Cardiac septum (tissue), 1 donor: ENCODE measurements at regions of chrX and their contacts with region 1.

Region 1: DNA sequence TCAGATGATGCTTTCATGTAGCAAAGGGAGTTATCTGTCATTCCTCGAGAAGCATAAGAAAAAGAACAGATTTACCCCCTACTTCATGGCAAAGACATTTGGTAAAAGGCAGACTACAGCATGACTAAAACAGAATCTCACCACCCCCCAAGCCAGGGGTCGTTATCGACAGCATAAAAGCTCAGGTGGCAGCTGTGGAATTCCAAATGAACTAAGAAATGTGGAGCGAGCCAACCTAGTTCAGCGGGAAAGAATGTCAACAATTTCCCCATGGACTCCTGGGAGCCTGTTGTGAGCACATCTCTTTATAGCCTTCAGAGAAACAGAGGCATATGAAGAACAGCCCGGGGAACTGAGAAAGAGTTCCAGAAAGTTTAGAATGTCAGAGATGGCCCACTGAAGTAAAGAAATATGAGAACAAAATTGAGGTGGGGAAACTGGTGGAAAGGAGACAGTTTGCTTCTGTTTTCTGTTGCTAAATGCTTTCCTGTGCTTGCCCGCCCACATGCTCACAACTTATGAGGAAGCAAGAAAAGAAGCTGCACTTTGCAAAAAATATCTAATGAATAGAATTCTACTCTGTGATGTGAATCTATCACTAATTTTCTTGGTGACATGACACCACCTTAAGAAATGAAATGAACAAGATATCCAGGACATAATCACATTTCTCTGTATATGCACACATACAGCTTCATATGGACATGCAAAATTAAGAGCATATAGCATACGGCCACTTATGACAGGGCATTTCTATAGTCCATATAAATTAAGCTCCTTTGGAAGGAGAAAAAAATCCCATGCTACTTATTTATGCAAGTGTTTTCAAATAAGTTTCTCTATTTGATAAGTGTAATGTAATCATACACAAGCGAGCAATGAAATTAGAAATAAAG is 135.3 kb upstream of the MID1 start:
- DNase-seq: no peak

Region 2: GRCh38 chrX:10098270-10098713 is 657.4 kb before region 1 on chrX:
- intact Hi-C with region 1: no loop called
- DNase-seq: no peak

Region 3: DNA sequence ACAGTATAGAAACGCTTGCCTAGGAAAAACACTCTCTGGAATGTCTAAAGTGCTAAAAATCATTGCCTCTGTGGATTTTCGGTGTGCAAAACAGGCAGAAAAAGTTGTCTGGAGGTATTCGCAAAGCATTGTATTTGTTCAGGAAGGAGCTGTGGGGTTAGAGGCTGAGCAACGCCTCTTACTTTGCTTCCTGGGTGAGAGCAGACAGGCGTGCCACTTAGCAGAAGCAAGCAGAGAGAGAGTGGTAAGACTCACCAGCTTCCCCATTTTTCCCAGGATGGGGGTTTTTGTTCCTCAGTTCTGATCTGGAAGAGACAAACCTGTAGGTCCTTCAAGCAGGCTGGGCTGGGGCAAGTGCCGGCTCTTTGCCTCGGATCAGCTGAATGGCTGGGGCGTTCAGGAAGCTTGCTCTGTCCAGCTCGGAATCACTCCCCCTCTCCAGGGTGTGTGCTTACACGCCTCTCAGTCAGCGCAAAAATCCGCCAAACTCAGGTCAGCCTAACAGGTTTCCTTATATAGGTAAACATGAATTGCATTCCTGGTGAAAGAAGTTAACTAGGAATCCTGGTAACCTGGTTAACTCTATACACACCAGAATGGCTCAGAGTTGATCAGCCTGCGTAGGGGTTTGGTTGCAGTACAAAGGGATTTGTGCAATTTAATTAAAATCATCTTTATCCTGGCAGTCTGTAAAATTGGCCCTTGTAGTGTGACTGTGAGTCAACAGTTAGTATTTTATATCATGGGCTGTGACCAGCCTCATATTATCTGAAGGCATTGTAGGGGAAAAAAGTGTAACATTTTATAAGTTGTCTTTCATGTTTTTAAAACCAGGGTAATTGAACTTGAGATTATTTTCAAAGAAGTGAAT is 77.8 kb after region 1 on chrX:
- intact Hi-C with region 1: loop called (anchors 10 kb)
- DNase-seq: no peak

Region 4: GRCh38 chrX:10902001-10902400 is 146.3 kb after region 1 on chrX:
- intact Hi-C with region 1: no loop called
- DNase-seq: no peak